Activated B cell treated with CpG ODN at 0.5 μM for 24 hours (primary cell): ENCODE measurements at regions of chr2 and their contacts with region 1.

Region 1: GRCh38 chr2:152175458-152176325 is at the start of gene STAM2:
- DNase-seq: peak; percentile 94
- ATAC-seq: peak; percentile 84
- H3K4me3 Mint-ChIP-seq: peak within 1 kb of the TSS; percentile 97
- H3K27ac Mint-ChIP-seq: peak within 1 kb of the TSS; percentile 100
- H3K4me1 Mint-ChIP-seq: peaks cover 40% of the 10 kb centered on the region
- H3K27me3 Mint-ChIP-seq: peaks cover 2% of the 10 kb centered on the region
- CTCF ChIP-seq: peak; percentile 25
- total RNA-seq, gene STAM2: 24.5 and 27.4 TPM in 2 replicates

Region 2: GRCh38 chr2:151289369-151290088 is 886.2 kb before region 1 on chr2 and contains the start of gene NMI:
- CTCF ChIA-PET with region 1: no interaction called
- POLR2A ChIA-PET with region 1: no interaction called
- intact Hi-C with region 1: loop called (anchors 1 kb)
- DNase-seq: peak; percentile 75
- ATAC-seq: peak; percentile 76
- H3K4me3 Mint-ChIP-seq: peak within 1 kb of the TSS; percentile 85
- H3K27ac Mint-ChIP-seq: peak within 1 kb of the TSS; percentile 94
- H3K4me1 Mint-ChIP-seq: peaks cover 44% of the 10 kb centered on the region
- H3K27me3 Mint-ChIP-seq: no peaks in the 10 kb centered on the region
- CTCF ChIP-seq: no peak
- total RNA-seq, gene NMI: 34.6 and 36.7 TPM in 2 replicates

Region 3: GRCh38 chr2:151828143-151828889 is 347.4 kb before region 1 on chr2 and contains the start of gene ARL5A:
- CTCF ChIA-PET with region 1: no interaction called
- POLR2A ChIA-PET with region 1: interaction called, 4 read pairs
- intact Hi-C with region 1: loop called (anchors 2 kb)
- DNase-seq: peak; percentile 97
- ATAC-seq: peak; percentile 95
- H3K4me3 Mint-ChIP-seq: peak within 1 kb of the TSS; percentile 83
- H3K27ac Mint-ChIP-seq: peak within 1 kb of the TSS; percentile 93
- H3K4me1 Mint-ChIP-seq: peaks cover 50% of the 10 kb centered on the region
- H3K27me3 Mint-ChIP-seq: no peaks in the 10 kb centered on the region
- CTCF ChIP-seq: no peak
- total RNA-seq, gene ARL5A: 51.0 and 53.2 TPM in 2 replicates

Region 4: DNA sequence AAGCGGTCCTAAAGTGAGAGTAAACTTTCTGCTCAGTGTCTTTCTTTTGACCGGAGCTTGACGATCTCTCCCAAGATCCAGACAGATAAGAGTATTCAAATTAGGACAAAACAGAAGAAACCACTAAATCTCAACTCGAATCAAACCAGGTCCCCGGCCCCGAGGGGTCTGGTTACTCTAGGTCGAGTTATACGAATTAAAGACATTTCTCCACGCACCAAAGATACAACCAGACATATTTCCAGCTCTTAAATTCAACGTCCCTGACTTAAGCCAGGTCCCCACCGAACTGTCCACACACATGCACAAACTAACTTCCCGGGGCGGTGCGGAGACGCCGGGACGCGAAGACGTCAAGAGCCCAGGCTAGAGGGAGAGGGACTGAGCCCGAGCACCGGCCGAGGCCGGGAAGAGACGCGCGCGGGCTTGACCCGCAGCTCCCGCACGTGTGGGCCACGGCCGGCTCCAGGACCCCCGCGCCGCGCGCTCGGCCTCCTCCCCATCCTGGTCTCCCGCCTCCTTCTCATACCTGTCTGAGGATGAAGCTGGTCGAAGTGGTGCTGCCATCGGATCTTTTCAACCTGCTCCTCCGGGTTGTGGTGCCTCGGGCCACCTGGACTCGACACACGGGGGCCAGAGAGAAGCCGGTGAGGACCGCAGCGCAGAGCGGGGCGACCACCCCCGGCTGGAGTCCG is 77.7 kb before region 1 on chr2:
- CTCF ChIA-PET with region 1: no interaction called
- POLR2A ChIA-PET with region 1: no interaction called
- intact Hi-C with region 1: loop called (anchors 2 kb)
- DNase-seq: peak; percentile 20
- ATAC-seq: peak; percentile 22
- H3K4me3 Mint-ChIP-seq: peak overlapping the region; percentile 82
- H3K27ac Mint-ChIP-seq: no peak overlapping the region
- H3K4me1 Mint-ChIP-seq: peaks cover 18% of the 10 kb centered on the region
- H3K27me3 Mint-ChIP-seq: peaks cover 37% of the 10 kb centered on the region
- CTCF ChIP-seq: no peak

Region 5: GRCh38 chr2:152335010-152335725 is 159.5 kb after region 1 on chr2 and contains the start of gene FMNL2:
- CTCF ChIA-PET with region 1: no interaction called
- POLR2A ChIA-PET with region 1: interaction called, 5 read pairs
- intact Hi-C with region 1: loop called (anchors 1 kb)
- DNase-seq: peak; percentile 73
- ATAC-seq: peak; percentile 88
- H3K4me3 Mint-ChIP-seq: peak within 1 kb of the TSS; percentile 85
- H3K27ac Mint-ChIP-seq: peak within 1 kb of the TSS; percentile 67
- H3K4me1 Mint-ChIP-seq: peaks cover 12% of the 10 kb centered on the region
- H3K27me3 Mint-ChIP-seq: peaks cover 5% of the 10 kb centered on the region
- CTCF ChIP-seq: no peak
- total RNA-seq, gene FMNL2: 2.8 and 4.0 TPM in 2 replicates

Region 6: GRCh38 chr2:152635635-152636298 is 460.1 kb after region 1 on chr2:
- CTCF ChIA-PET with region 1: interaction called, 40 read pairs
- POLR2A ChIA-PET with region 1: interaction called, 20 read pairs
- intact Hi-C with region 1: loop called (anchors 1 kb)
- DNase-seq: peak; percentile 36
- ATAC-seq: peak; percentile 70
- H3K4me3 Mint-ChIP-seq: no peak overlapping the region
- H3K27ac Mint-ChIP-seq: no peak overlapping the region
- H3K4me1 Mint-ChIP-seq: no peaks in the 10 kb centered on the region
- H3K27me3 Mint-ChIP-seq: no peaks in the 10 kb centered on the region
- CTCF ChIP-seq: no peak

Region 7: GRCh38 chr2:152740743-152741328 is 565.1 kb after region 1 on chr2:
- CTCF ChIA-PET with region 1: no interaction called
- POLR2A ChIA-PET with region 1: no interaction called
- intact Hi-C with region 1: loop called (anchors 1 kb)
- DNase-seq: no peak
- ATAC-seq: peak; percentile 79
- H3K4me3 Mint-ChIP-seq: no peak overlapping the region
- H3K27ac Mint-ChIP-seq: no peak overlapping the region
- H3K4me1 Mint-ChIP-seq: peaks cover 2% of the 10 kb centered on the region
- H3K27me3 Mint-ChIP-seq: no peaks in the 10 kb centered on the region
- CTCF ChIP-seq: peak; percentile 54